ENCODE measurements at regions of chr4 and their contacts with region 1.

Region 1: GRCh38 chr4:26583865-26584652 is at the start of gene TBC1D19:
- DNase-seq: peak; percentile 78 to 93 (median 88)
- H3K4me3 ChIP-seq: peak within 1 kb of the TSS; percentile 55 to 98 (median 85)
- H3K27ac ChIP-seq: peak within 1 kb of the TSS; percentile 21 to 92 (median 76)
- H3K27me3 ChIP-seq: no peaks in the 10 kb centered on the region
- CTCF ChIP-seq: peak in 37 of 56 donors; percentile 8 to 61 (median 29)
- total RNA-seq, gene TBC1D19: 14.4 to 38.3 (median 22.7) TPM

Region 2: DNA sequence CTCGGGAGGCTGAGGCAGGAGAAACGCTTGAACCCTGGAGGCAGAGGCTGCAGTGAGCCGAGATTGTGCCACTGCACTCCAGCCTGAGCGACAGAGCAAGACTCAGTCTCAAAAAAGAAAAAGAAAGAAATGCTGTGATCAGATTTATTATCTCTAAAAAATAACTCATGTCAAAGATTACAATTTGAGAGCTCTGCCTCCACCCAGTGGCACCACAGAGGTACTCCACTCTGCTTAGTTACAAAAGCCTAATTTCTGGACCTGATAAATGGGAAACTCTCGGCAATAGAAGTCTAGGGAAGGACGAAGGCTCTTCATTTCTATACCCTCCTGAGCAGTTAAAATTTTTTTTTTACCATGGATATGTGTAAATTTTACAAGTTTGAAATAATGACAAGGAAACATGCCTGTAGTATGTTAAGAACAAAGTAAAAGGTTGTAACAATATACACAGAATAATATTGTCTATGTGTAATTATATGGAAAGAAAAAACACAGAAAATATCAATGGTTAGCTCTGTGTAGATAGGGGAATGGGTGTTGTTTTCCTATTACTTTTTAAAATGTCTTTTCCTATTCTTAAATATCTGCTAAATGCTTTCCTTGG is 426.4 kb after region 1 on chr4:
- intact Hi-C with region 1: loop called in 1 of 2 experiments (anchors 10 kb)
- DNase-seq: peak; percentile 32 to 73 (median 62)
- H3K4me3 ChIP-seq: peak overlapping the region in 2 of 59 donors; percentile 8 to 15
- H3K27ac ChIP-seq: peak overlapping the region in 5 of 59 donors; percentile 5 to 40 (median 9)
- H3K27me3 ChIP-seq: no peaks in the 10 kb centered on the region
- CTCF ChIP-seq: peak; percentile 65 to 97 (median 91)